ENCODE measurements at regions of chr18 and their contacts with region 1.

Region 1: DNA sequence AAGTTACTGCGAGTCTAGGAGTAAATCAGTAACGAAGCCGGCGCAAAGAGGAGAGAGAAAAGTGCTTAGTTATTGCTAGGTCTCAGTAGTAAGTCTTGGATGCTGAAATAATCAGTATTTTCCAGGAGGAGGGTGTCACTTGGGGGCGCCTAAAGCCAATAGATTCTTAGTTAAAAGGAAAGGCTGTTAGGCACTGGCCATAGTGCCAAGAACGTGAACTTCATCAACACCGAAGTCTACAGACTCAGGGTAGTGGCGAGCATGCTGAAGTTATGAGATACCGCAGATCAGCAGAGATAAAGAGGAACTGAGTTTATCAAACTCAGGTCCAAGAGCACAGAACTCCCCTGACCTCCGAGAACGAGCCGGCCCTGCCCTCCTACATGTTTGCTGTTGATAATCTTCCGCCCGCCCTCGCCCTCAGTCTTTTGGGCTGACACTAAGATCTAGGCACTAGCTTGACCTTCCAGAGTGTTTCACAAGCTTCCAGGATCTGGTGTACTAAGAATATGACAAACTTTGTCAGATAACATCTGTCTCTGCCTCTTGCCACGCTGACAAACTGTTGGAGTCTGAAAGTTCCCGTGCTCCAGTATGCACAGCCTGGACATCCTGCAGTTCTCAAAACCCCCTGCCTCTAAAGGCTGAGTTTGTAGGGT is 49.2 kb downstream of the CYB5A start:
- DNase-seq: no peak
- H3K4me3 Mint-ChIP-seq: no peak overlapping the region
- H3K27ac Mint-ChIP-seq: no peak overlapping the region
- H3K4me1 Mint-ChIP-seq: peaks cover under 1% of the 10 kb centered on the region
- H3K27me3 Mint-ChIP-seq: peaks cover 19% of the 10 kb centered on the region

Region 2: GRCh38 chr18:74063023-74063422 is 179.5 kb before region 1 on chr18:
- CTCF ChIA-PET with region 1: no interaction called
- POLR2A ChIA-PET with region 1: no interaction called
- intact Hi-C with region 1: no loop called
- DNase-seq: peak; percentile 43
- H3K4me3 Mint-ChIP-seq: no peak overlapping the region
- H3K27ac Mint-ChIP-seq: peak overlapping the region; percentile 38
- H3K4me1 Mint-ChIP-seq: peaks cover 25% of the 10 kb centered on the region
- H3K27me3 Mint-ChIP-seq: peaks cover 5% of the 10 kb centered on the region

Region 3: GRCh38 chr18:74176283-74176682 is 66.3 kb before region 1 on chr18:
- CTCF ChIA-PET with region 1: no interaction called
- POLR2A ChIA-PET with region 1: no interaction called
- intact Hi-C with region 1: loop called (anchors 5 kb)
- DNase-seq: no peak
- H3K4me3 Mint-ChIP-seq: no peak overlapping the region
- H3K27ac Mint-ChIP-seq: no peak overlapping the region
- H3K4me1 Mint-ChIP-seq: peaks cover 5% of the 10 kb centered on the region
- H3K27me3 Mint-ChIP-seq: peaks cover 26% of the 10 kb centered on the region